B cell (primary cell): ENCODE measurements at regions of chr14 and their contacts with region 1.

Region 1: DNA sequence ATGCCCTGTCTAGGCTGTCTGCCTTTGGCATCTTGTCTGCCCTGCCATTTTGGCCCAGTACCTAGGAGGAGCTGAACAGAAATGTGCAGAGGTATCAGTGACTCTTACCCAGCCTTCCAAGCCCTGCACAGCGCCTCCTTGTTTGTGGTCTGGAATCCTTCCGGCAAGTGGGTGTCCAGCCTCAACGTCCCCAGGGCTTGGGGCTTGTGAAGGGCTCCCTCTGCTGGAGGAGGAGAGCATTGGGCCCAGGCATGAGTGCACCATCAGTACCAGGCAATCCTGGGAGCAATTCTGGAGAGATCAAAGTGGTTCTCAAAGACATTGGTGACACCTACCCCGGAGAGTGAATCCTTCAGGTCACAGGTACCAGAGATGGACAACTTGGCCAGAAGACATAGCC is 2.4 kb upstream of the TCL1B start:
- DNase-seq: peak; percentile 53
- ATAC-seq: peak; percentile 56
- H3K4me3 ChIP-seq: no peak overlapping the region
- H3K4me3 Mint-ChIP-seq: no peak overlapping the region
- H3K27ac ChIP-seq: no peak overlapping the region
- H3K27ac Mint-ChIP-seq: no peak overlapping the region
- H3K4me1 ChIP-seq: peaks cover 61 to 68% of the 10 kb centered on the region in 2 donors
- H3K4me1 Mint-ChIP-seq: peaks cover 62% of the 10 kb centered on the region
- H3K27me3 ChIP-seq: no peaks in the 10 kb centered on the region
- H3K27me3 Mint-ChIP-seq: peaks cover 24% of the 10 kb centered on the region
- CTCF ChIP-seq: peak; percentile 57

Region 2: GRCh38 chr14:95561001-95561412 is 122.8 kb before region 1 on chr14:
- CTCF ChIA-PET with region 1: interaction called, 10 read pairs
- POLR2A ChIA-PET with region 1: no interaction called
- intact Hi-C with region 1: loop called (anchors 1 kb)
- DNase-seq: peak; percentile 91
- ATAC-seq: peak; percentile 97
- H3K4me3 ChIP-seq: no peak overlapping the region
- H3K4me3 Mint-ChIP-seq: no peak overlapping the region
- H3K27ac ChIP-seq: no peak overlapping the region
- H3K27ac Mint-ChIP-seq: peak overlapping the region; percentile 4
- H3K4me1 ChIP-seq: peaks cover 0 to 3% of the 10 kb centered on the region in 2 donors
- H3K4me1 Mint-ChIP-seq: peaks cover 4% of the 10 kb centered on the region
- H3K27me3 ChIP-seq: peaks cover 0 to 14% (median 6%) of the 10 kb centered on the region in 4 experiments
- H3K27me3 Mint-ChIP-seq: peaks cover 23% of the 10 kb centered on the region
- CTCF ChIP-seq: peak; percentile 99

Region 3: DNA sequence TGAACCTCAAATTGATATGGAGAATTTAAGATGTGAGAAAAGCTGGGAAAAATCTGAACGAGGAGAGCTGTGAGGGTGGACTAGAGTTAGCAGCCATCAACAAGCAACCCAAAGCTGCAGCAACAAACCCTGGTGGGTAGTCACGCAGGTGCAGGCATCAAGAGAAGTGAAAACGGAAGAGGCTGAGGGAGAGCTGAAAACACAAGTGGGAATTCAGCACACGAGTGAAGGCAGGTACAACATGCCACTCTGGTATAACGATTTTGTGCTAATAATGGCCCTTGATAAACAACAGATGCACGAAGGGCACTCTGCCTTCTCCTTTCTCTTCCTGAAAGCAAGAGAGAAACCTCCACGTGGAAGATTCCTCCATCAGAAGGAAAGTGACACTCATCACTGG is 14.0 kb after region 1 on chr14:
- CTCF ChIA-PET with region 1: interaction called, 18 read pairs
- POLR2A ChIA-PET with region 1: interaction called, 7 read pairs
- intact Hi-C with region 1: no loop called
- DNase-seq: peak; percentile 76
- ATAC-seq: peak; percentile 64
- H3K4me3 ChIP-seq: peak overlapping the region in 3 of 5 experiments; percentile 9 to 56 (median 16)
- H3K4me3 Mint-ChIP-seq: peak overlapping the region; percentile 81
- H3K27ac ChIP-seq: peak overlapping the region; percentile 87 to 94
- H3K27ac Mint-ChIP-seq: peak overlapping the region; percentile 95
- H3K4me1 ChIP-seq: peaks cover 100% of the 10 kb centered on the region in 2 donors
- H3K4me1 Mint-ChIP-seq: peaks cover 83% of the 10 kb centered on the region
- H3K27me3 ChIP-seq: no peaks in the 10 kb centered on the region
- H3K27me3 Mint-ChIP-seq: peaks cover 34% of the 10 kb centered on the region
- CTCF ChIP-seq: peak; percentile 19

Region 4: DNA sequence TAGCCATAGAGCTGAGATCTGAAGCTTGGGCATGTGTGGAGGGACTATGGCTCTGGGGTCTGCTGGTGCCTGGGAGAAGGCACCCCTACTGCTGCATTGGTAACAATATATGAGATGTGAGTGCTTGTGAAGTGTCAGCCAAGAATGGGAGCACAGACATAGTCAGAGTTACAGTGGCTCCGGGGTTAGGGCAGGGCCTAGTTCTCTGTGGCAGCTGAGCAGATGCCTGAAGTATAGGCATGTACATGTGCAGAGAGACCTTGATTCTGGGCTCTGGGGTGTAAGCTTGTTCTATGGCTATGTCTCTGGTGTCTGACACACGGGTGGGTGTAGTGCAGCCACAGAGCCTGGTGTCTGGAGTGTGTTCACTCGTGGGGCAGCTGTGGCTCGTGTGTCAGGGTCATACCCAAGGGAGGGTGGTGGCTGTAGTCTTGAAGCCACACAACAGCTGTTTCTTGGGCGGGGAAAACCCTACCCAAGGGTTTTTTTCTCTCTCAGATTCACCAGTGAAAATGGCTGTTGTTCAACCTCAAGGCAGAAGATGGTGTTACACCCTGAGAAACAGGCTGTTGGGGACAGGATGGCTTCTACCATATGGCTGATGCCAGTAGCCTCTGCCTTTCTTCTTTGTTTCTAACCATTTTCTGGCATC is 42.0 kb after region 1 on chr14:
- CTCF ChIA-PET with region 1: no interaction called
- POLR2A ChIA-PET with region 1: no interaction called
- intact Hi-C with region 1: no loop called
- DNase-seq: peak; percentile 78
- ATAC-seq: peak; percentile 91
- H3K4me3 ChIP-seq: peak overlapping the region in 4 of 5 experiments; percentile 3 to 45 (median 32)
- H3K4me3 Mint-ChIP-seq: peak overlapping the region; percentile 68
- H3K27ac ChIP-seq: peak overlapping the region; percentile 59 to 74
- H3K27ac Mint-ChIP-seq: peak overlapping the region; percentile 90
- H3K4me1 ChIP-seq: peaks cover 66 to 69% of the 10 kb centered on the region in 2 donors
- H3K4me1 Mint-ChIP-seq: peaks cover 67% of the 10 kb centered on the region
- H3K27me3 ChIP-seq: no peaks in the 10 kb centered on the region
- H3K27me3 Mint-ChIP-seq: peaks cover 30% of the 10 kb centered on the region
- CTCF ChIP-seq: no peak